ENCODE measurements at regions of chr10 and their contacts with region 1.

Region 1: GRCh38 chr10:63711867-63712716 is 190.9 kb downstream of the REEP3 start:
- DNase-seq: peak; percentile 98
- H3K4me3 ChIP-seq: no peak overlapping the region
- H3K27ac ChIP-seq: peak overlapping the region; percentile 80 to 94 (median 84)
- H3K4me1 ChIP-seq: peaks cover 0 to 53% (median 47%) of the 10 kb centered on the region in 4 donors
- H3K27me3 ChIP-seq: no peaks in the 10 kb centered on the region
- CTCF ChIP-seq: no peak
- EP300 ChIP-seq: peak; percentile 27 to 83 (median 41)
- POLR2A ChIP-seq: no peak

Region 2: GRCh38 chr10:62732841-62733653 is 979.0 kb before region 1 on chr10:
- intact Hi-C with region 1: no loop called
- DNase-seq: no peak
- H3K4me3 ChIP-seq: no peak overlapping the region
- H3K27ac ChIP-seq: no peak overlapping the region
- H3K4me1 ChIP-seq: no peaks in the 10 kb centered on the region
- H3K27me3 ChIP-seq: no peaks in the 10 kb centered on the region
- CTCF ChIP-seq: no peak
- EP300 ChIP-seq: no peak
- POLR2A ChIP-seq: no peak

Region 3: DNA sequence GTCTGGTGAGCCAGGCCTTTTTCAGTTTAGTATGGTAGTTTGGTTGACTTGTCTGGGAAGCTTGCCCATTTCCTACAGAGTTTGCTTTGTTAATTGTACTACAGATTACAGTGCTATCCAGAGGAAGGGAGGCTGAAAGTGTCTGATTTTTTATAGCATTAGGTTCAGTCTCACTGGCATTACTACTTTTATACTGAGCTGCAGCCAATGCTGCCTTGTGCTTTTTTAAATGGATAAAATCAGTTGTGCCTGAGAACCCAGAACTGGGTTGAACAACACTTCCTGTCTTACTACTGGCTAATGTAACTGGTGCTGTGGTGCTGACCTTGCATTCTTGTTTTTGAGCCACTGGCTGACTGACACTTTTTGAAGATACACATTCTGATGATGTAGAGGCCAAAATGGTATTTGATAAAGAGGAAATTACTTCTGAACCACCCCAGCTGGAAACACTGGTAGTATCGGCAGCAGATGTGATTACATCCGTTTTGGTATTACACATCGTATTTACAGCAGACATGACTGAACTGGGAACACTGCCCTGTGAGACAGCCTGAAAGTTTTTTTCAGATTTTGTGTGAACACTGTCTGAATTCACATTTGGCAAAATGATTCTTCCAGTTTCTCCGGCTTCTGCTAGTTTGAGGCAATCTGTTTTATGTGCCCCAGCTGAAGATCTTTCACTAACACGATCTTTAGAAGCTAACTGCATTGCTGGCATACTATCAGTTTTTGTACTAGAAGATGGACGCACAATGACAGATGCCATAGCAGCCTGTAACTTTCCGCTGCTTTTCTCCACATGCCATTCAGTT is 504.9 kb before region 1 on chr10:
- intact Hi-C with region 1: loop called (anchors 5 kb)
- DNase-seq: no peak
- H3K4me3 ChIP-seq: peak overlapping the region in 3 of 4 donors; percentile 5 to 11 (median 8)
- H3K27ac ChIP-seq: peak overlapping the region; percentile 53 to 79 (median 72)
- H3K4me1 ChIP-seq: peaks cover 0 to 64% (median 49%) of the 10 kb centered on the region in 4 donors
- H3K27me3 ChIP-seq: no peaks in the 10 kb centered on the region
- CTCF ChIP-seq: no peak
- EP300 ChIP-seq: no peak
- POLR2A ChIP-seq: no peak

Region 4: DNA sequence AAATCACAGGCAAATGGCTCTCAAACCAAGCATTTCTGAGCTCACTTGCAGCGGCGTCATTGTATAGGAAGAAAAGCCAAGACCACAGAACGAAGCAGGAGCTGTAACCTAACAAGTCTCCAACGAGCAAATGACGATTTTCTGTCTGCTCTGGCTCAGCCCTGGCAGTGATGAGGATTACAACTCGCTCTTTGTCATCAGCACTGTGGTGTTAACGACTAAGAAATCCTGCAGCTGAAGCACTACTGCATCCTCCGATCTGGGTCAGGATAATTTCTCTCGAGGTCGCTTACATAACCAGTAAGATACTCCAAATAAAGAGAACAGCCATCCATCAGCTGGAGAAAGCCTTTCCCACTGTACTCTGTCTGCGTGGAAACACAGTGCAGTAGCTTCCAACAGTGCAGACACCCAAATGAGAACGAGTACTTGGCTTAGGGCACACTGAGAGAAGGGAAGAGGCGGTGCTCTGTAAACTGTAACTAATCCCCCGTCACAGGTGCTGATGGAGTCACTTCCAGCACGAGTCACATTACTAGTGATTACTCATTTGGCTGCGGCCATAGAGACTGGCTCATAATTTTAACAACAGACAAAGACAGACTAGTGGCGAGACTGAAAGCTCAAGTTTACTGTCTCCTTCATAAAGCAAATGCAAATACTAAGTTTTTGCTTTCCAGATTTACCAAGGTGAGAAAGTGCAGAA is 443.1 kb before region 1 on chr10:
- intact Hi-C with region 1: loop called (anchors 5 kb)
- DNase-seq: peak; percentile 95
- H3K4me3 ChIP-seq: peak overlapping the region; percentile 38 to 55 (median 52)
- H3K27ac ChIP-seq: peak overlapping the region; percentile 83 to 91 (median 90)
- H3K4me1 ChIP-seq: peaks cover 0 to 35% (median 19%) of the 10 kb centered on the region in 4 donors
- H3K27me3 ChIP-seq: no peaks in the 10 kb centered on the region
- CTCF ChIP-seq: peak in 2 of 4 experiments; percentile 14 to 44
- EP300 ChIP-seq: peak in 3 of 4 donors; percentile 49 to 92 (median 56)
- POLR2A ChIP-seq: peak; percentile 70 to 89

Region 5: GRCh38 chr10:63521416-63522276 is 190.4 kb before region 1 on chr10:
- intact Hi-C with region 1: loop called (anchors 2 kb)
- DNase-seq: peak; percentile 88
- H3K4me3 ChIP-seq: peak overlapping the region; percentile 80 to 92 (median 86)
- H3K27ac ChIP-seq: peak overlapping the region; percentile 98 to 100 (median 98)
- H3K4me1 ChIP-seq: peaks cover 0 to 80% (median 52%) of the 10 kb centered on the region in 4 donors
- H3K27me3 ChIP-seq: no peaks in the 10 kb centered on the region
- CTCF ChIP-seq: no peak
- EP300 ChIP-seq: no peak
- POLR2A ChIP-seq: peak in 1 of 2 donors; percentile 59

Measured in sigmoid colon (tissue), 7 donors.